Calu3 (cell line): ENCODE measurements at regions of chr1 and their contacts with region 1.

Region 1: GRCh38 chr1:64268653-64269557 is 65.5 kb downstream of the UBE2U start:
- DNase-seq: peak; percentile 78
- H3K4me3 Mint-ChIP-seq: no peak overlapping the region
- H3K27ac Mint-ChIP-seq: no peak overlapping the region
- H3K4me1 Mint-ChIP-seq: no peaks in the 10 kb centered on the region
- H3K27me3 Mint-ChIP-seq: peaks cover 1% of the 10 kb centered on the region
- CTCF ChIP-seq: peak; percentile 85

Region 2: GRCh38 chr1:64343105-64343887 is 74.4 kb after region 1 on chr1:
- CTCF ChIA-PET with region 1: no interaction called
- intact Hi-C with region 1: loop called (anchors 2 kb)
- DNase-seq: peak; percentile 64
- H3K4me3 Mint-ChIP-seq: no peak overlapping the region
- H3K27ac Mint-ChIP-seq: peak overlapping the region; percentile 52
- H3K4me1 Mint-ChIP-seq: peaks cover 25% of the 10 kb centered on the region
- H3K27me3 Mint-ChIP-seq: no peaks in the 10 kb centered on the region
- CTCF ChIP-seq: no peak

Region 3: GRCh38 chr1:64403331-64403730 is 134.4 kb after region 1 on chr1:
- CTCF ChIA-PET with region 1: no interaction called
- intact Hi-C with region 1: loop called (anchors 5 kb)
- DNase-seq: no peak
- H3K4me3 Mint-ChIP-seq: no peak overlapping the region
- H3K27ac Mint-ChIP-seq: no peak overlapping the region
- H3K4me1 Mint-ChIP-seq: no peaks in the 10 kb centered on the region
- H3K27me3 Mint-ChIP-seq: peaks cover 72% of the 10 kb centered on the region
- CTCF ChIP-seq: no peak

Region 4: GRCh38 chr1:64487061-64487460 is 218.2 kb after region 1 on chr1:
- CTCF ChIA-PET with region 1: no interaction called
- intact Hi-C with region 1: loop called (anchors 5 kb)
- DNase-seq: no peak
- H3K4me3 Mint-ChIP-seq: no peak overlapping the region
- H3K27ac Mint-ChIP-seq: no peak overlapping the region
- H3K4me1 Mint-ChIP-seq: peaks cover 7% of the 10 kb centered on the region
- H3K27me3 Mint-ChIP-seq: no peaks in the 10 kb centered on the region
- CTCF ChIP-seq: peak; percentile 12

Region 5: DNA sequence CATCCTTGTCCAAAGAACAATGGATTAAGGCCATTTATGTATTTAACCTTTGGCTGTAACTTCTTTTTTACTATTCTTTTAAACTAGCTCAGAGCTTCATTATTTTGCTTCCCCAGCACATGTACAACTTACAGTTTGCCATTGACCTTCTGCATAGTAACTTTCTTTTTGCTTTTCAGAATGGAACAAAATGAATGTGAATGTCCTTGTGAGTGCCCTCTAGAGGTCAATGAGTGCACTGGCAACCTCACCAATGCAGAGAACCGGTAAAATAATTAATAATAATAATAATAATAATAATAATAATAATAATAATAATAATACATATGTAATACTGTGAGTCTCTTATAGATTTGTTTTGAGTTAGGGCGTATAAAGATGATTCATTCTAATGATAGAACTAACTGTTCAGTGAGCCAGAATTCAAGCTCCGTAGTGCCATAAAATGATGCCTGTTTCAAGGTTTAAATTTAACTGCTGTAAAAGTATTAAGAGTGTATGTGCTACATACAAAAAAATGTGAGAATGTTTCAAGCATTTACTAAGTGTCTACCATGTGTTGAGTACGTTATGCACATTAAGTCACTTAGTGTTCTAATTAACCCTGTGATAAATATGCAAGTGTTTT is 406.9 kb after region 1 on chr1:
- CTCF ChIA-PET with region 1: interaction called, 4 read pairs
- intact Hi-C with region 1: loop called (anchors 2 kb)
- DNase-seq: no peak
- H3K4me3 Mint-ChIP-seq: no peak overlapping the region
- H3K27ac Mint-ChIP-seq: no peak overlapping the region
- H3K4me1 Mint-ChIP-seq: no peaks in the 10 kb centered on the region
- H3K27me3 Mint-ChIP-seq: no peaks in the 10 kb centered on the region
- CTCF ChIP-seq: no peak

Region 6: GRCh38 chr1:64823691-64824476 is 555.0 kb after region 1 on chr1:
- CTCF ChIA-PET with region 1: interaction called, 3 read pairs
- intact Hi-C with region 1: loop called (anchors 1 kb)
- DNase-seq: peak; percentile 65
- H3K4me3 Mint-ChIP-seq: no peak overlapping the region
- H3K27ac Mint-ChIP-seq: no peak overlapping the region
- H3K4me1 Mint-ChIP-seq: no peaks in the 10 kb centered on the region
- H3K27me3 Mint-ChIP-seq: no peaks in the 10 kb centered on the region
- CTCF ChIP-seq: no peak